ENCODE measurements at regions of chr2 and their contacts with region 1.

Region 1: DNA sequence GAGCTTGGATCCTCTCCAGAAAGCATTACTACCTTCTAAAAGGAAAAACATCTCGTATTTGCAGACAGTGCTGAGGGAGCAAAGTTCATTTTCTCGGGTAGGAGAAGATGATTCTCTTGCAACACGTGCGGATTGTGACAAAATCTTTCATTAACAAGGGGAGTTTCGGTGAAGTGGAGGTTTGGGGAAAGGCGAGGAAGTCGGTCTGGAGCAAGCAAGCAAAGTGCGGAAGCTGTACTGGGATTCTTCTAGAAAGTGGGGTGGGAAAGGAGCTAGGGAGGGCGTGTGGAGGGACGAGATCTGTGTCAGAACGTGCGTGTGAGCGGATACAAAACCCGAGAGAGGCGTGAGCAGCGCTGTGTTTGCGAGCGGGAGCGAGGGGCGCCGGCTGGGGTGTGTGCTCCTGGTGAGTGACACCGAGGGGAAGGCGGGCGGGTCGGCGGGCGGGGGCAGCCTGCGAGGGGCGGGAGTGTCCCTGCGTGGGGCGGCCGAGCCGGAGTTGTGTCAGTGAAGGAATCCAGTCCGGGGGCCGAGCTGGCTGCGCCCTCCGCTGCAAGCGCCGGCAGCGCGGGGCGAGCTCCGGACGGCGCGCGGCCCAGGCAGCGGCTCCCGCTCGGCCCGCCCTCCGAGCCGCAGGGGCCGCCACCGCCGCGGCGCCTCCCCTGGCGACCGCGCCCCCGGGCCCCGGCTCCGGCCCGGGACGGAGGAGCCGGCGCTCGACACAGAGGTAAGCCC is at the start of gene SPATS2L:
- DNase-seq: peak; percentile 61 to 95 (median 74)

Region 2: DNA sequence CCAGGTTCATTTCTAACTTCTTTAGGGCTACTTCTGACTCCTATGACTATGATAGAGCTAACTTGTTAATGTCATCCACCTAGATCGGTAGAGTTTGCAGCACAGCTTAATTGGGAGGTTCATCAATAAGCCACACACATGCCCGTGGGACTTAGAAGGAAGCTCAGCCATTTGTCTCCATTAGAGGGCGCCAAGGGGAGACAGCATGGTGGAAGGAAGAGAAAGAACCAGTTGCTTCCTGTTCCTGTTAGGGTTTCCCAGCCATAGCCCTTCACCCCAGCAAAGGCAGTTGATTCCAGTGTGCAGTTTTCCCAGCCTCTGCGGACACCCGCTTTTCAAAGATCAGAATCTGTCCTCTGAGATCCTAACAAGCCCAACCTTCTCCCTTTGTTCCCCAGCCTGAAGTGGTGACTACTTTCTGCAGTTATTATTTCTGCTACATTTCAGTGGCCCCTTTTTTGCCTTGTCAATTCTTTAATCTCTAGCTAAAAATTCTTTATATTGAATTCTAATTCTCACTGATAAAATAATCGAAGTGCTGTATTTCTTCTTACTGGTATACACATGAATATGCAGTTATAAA is 320.6 kb before region 1 on chr2:
- intact Hi-C with region 1: loop called (anchors 5 kb)
- DNase-seq: peak in 6 of 10 donors; percentile 35 to 76 (median 43)

Region 3: GRCh38 chr2:200376513-200377354 is 70.4 kb after region 1 on chr2:
- intact Hi-C with region 1: loop called (anchors 5 kb)
- DNase-seq: no peak

Region 4: DNA sequence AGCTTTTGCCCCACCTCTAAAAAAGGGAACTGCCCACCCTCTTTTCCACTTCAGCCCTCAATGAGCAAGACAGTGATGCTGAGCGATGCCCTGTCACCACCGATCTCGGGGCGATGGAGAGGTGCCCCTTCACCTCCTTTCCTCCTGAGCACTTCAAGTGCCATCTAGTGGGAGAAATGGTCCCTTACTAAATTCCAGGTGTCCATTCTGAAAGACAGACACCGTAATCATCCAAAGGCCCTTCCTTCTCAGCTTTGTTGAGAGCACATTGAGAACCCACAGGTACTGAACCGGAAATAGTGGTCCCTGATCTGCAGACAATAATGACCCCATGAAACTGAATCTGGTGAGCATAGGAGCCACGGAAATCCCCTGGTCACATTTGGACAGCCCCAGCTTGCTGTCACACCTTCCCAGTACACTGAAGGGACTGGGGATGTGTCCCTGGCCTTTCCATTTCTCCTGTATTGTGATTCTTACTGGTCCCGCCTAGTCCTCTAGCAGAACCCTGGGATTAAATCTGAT is 165.0 kb after region 1 on chr2:
- intact Hi-C with region 1: loop called (anchors 2 kb)
- DNase-seq: peak in 7 of 10 donors; percentile 32 to 88 (median 57)

Region 5: DNA sequence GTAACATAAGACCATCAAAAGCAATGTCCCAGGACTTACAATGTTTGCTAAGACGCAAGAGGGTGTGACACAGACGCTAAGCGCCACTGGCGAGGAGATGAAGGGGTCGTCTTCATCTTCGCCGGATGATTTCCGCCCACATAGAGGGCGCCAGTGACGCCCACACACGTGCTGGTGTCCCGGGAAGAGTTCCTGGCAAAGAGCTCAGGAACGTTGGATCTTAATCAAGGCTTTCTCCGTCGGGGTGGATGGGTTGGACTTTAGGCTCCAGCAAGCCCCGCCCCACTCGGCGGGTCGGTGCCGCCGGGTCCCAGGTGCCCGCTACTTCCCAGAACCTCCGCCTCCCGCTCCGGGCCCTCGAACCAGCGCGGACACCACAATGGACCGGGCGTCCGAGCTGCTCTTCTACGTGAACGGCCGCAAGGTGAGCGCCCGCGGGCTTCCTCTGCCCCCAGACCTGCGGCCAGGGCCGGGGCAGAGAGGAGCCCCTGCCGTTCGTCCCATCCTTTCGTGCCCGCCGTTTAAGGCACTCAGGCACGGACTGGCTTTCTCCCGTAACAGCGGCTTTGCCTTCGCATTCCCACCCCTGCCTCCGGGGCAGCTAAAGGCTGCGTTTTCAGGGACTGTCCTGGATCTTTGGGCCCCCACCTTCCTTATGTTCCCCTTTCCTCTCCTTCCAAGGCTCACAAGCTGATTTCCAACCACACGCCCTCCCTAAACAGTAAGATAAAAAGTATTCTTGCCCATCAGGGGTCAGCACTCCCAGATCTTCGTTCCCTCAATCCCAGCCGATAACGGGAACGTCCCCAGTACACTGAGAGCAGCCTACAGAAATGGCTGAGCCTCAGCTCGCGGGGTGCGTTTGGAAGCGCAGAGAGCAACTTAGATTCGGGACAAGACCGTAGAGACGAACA is 279.6 kb after region 1 on chr2 and contains the start of gene AOX1:
- intact Hi-C with region 1: no loop called
- DNase-seq: peak in 7 of 10 donors; percentile 3 to 85 (median 45)